Caki2 (cell line): ENCODE measurements at regions of chr10 and their contacts with region 1.

Region 1: DNA sequence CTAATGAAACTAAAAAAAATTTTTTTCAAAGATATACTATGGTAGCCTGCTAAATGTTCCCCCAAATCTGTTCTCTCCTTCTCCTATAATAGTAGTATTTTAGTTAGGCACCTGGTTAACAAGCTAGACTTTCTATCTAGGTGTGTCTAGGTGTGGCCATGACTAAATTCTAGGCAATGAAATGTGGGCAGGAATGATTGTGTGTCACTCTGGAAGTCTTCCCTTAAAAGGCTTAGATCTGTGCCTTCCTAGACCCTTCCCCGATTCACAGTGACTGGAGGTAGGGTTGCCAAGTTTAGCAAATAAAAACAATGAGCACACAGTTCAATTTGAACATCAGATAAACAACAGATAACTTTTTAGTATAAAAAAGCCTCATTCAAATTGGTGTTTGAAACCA is 8.3 kb upstream of the ARHGAP21 start:
- DNase-seq: no peak

Region 2: DNA sequence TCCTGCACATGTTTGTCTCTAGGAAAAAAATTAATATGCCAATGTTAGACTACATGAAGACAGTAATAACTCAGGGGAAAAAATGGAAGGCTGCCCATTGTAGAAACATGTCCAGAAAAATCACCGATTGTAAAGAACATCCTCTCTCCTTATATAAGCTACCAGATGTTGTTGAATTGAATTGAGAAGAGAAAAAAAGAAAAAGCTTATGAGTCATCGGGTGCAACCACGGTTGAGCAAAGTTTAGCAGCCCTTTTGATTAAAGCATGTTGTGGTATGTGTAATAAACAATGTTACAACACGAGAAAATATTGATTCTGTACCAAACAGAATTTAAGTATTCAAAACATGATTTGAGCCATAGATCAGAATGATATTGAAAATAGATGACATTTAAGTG is 94.1 kb after region 1 on chr10:
- in situ Hi-C with region 1: loop called (anchors 10 kb)
- DNase-seq: peak; percentile 30